ENCODE measurements at regions of chr14 and their contacts with region 1.

Region 1: DNA sequence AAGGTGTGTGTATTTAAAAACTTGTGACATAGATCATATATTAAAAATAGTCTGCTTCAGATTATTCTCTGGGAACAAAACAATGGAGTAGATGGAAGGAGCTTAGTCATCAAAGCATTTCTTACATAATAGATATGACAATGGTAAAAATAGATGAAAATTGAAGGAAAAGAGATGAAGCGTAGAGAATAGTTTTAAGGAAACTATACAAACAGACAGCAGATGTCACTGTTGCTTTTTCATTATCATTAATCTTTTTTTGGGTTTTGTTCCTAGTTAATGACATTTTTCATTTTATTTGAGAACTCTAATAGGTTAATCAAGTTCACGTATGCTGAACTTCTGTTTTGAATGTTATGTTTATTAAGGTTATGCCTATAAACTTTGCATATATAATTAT is 149.2 kb upstream of the FBXO33 start:
- DNase-seq: no peak
- H3K4me3 Mint-ChIP-seq: no peak overlapping the region
- H3K27ac Mint-ChIP-seq: no peak overlapping the region
- H3K4me1 Mint-ChIP-seq: no peaks in the 10 kb centered on the region
- H3K27me3 Mint-ChIP-seq: no peaks in the 10 kb centered on the region

Region 2: DNA sequence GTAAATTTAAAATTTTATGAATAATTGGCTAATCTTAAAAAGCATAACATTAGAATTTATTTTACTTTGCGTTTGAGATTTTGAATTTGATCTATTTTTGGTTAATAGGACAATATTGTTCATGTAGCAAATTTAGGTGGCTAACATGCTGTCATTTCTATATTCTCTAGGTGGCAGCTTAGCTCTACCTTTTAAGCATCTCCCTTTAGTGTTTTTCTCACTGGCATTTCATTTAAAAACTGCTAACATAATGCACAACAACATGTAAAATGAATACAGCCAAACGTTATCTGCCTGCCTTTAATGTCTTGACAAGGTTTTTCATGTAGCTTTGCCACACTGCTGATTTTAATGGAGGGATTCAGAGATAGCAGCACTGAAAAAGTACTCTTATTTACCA is 123.1 kb after region 1 on chr14:
- intact Hi-C with region 1: loop called (anchors 5 kb)
- DNase-seq: no peak
- H3K4me3 Mint-ChIP-seq: no peak overlapping the region
- H3K27ac Mint-ChIP-seq: no peak overlapping the region
- H3K4me1 Mint-ChIP-seq: no peaks in the 10 kb centered on the region
- H3K27me3 Mint-ChIP-seq: no peaks in the 10 kb centered on the region

Measured in activated T-helper 1 cell treated with anti-CD3 and anti-CD28 coated beads, Interleukin-12 subunit alpha, Interleukin-12 subunit beta, Interleukin-2, Interleukin-4 antibody, amounts not matched to agents 30 ng/mL and 10 ng/mL and 1 ng/mL, durations not matched to agents 14 hours and 24 hours and 36 hours (primary cell).